MCF 10A (cell line): ENCODE measurements at regions of chr3 and their contacts with region 1.

Region 1: GRCh38 chr3:170414202-170414663 is 4.4 kb upstream of the CLDN11 start:
- DNase-seq: peak; percentile 78
- H3K4me3 Mint-ChIP-seq: no peak overlapping the region
- H3K27ac Mint-ChIP-seq: peak overlapping the region; percentile 39
- H3K4me1 Mint-ChIP-seq: peaks cover 9% of the 10 kb centered on the region
- H3K27me3 Mint-ChIP-seq: no peaks in the 10 kb centered on the region
- CTCF ChIP-seq: peak; percentile 95

Region 2: GRCh38 chr3:169764452-169765274 is 649.6 kb before region 1 on chr3 and contains the start of gene TERC:
- CTCF ChIA-PET with region 1: no interaction called
- POLR2A ChIA-PET with region 1: no interaction called
- intact Hi-C with region 1: loop called (anchors 2 kb)
- DNase-seq: peak; percentile 95
- H3K4me3 Mint-ChIP-seq: peak within 1 kb of the TSS; percentile 75
- H3K27ac Mint-ChIP-seq: peak within 1 kb of the TSS; percentile 94
- H3K4me1 Mint-ChIP-seq: peaks cover 10% of the 10 kb centered on the region
- H3K27me3 Mint-ChIP-seq: no peaks in the 10 kb centered on the region
- CTCF ChIP-seq: no peak
- total RNA-seq, gene TERC: 2.9 and 7.9 TPM in 2 replicates

Region 3: DNA sequence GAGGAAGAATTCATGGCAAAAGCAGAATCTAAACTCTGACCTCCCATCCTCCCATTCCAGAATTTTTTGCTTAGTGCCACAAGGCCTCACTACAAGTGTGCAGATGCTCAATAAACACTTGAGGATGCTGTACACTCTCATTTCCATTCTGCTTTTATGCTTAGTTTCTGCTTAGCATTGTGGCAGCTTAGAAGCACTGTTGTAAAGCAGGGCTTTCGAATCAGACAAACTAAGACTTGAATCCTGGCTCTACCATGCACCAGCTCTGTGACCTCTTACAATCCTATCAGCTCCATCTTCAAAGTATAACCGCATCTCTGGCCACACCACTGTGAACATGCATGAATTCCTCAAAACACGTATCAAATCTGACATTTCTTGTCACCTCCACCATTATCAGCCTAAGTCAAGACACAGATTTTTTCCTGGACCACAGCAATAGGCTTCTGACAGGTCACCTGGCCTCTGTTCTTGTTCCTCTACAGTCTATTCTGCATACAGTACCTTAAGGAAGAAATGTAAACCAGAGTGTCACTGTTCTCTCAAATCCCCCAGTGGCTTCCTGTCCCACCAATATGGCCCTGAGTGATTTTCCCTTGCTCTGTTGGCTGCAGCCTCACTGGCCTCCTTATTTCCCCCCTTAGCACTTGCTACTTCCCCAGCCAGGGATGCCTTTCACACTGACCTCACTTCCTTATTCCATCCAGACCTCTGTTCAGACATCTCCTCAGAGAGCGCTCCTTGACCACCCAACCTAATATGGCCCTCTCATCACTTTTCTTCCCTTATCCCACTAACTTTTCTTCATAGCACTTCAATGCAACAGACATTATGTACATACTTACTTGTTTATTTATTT is 224.6 kb before region 1 on chr3:
- CTCF ChIA-PET with region 1: interaction called, 3 read pairs
- POLR2A ChIA-PET with region 1: no interaction called
- intact Hi-C with region 1: loop called (anchors 1 kb)
- DNase-seq: no peak
- H3K4me3 Mint-ChIP-seq: no peak overlapping the region
- H3K27ac Mint-ChIP-seq: no peak overlapping the region
- H3K4me1 Mint-ChIP-seq: no peaks in the 10 kb centered on the region
- H3K27me3 Mint-ChIP-seq: no peaks in the 10 kb centered on the region
- CTCF ChIP-seq: no peak

Region 4: GRCh38 chr3:170330366-170330765 is 83.9 kb before region 1 on chr3:
- CTCF ChIA-PET with region 1: interaction called, 12 read pairs
- POLR2A ChIA-PET with region 1: no interaction called
- intact Hi-C with region 1: no loop called
- DNase-seq: peak; percentile 89
- H3K4me3 Mint-ChIP-seq: no peak overlapping the region
- H3K27ac Mint-ChIP-seq: peak overlapping the region; percentile 73
- H3K4me1 Mint-ChIP-seq: peaks cover 11% of the 10 kb centered on the region
- H3K27me3 Mint-ChIP-seq: no peaks in the 10 kb centered on the region
- CTCF ChIP-seq: no peak

Region 5: GRCh38 chr3:170429050-170429449 is 14.8 kb after region 1 on chr3:
- CTCF ChIA-PET with region 1: interaction called, 16 read pairs
- POLR2A ChIA-PET with region 1: no interaction called
- intact Hi-C with region 1: no loop called
- DNase-seq: no peak
- H3K4me3 Mint-ChIP-seq: no peak overlapping the region
- H3K27ac Mint-ChIP-seq: no peak overlapping the region
- H3K4me1 Mint-ChIP-seq: no peaks in the 10 kb centered on the region
- H3K27me3 Mint-ChIP-seq: no peaks in the 10 kb centered on the region
- CTCF ChIP-seq: no peak

Region 6: GRCh38 chr3:170499565-170500156 is 85.4 kb after region 1 on chr3:
- CTCF ChIA-PET with region 1: interaction called, 85 read pairs
- POLR2A ChIA-PET with region 1: no interaction called
- intact Hi-C with region 1: loop called (anchors 1 kb)
- DNase-seq: peak; percentile 69
- H3K4me3 Mint-ChIP-seq: no peak overlapping the region
- H3K27ac Mint-ChIP-seq: no peak overlapping the region
- H3K4me1 Mint-ChIP-seq: peaks cover 6% of the 10 kb centered on the region
- H3K27me3 Mint-ChIP-seq: no peaks in the 10 kb centered on the region
- CTCF ChIP-seq: peak; percentile 62

Region 7: DNA sequence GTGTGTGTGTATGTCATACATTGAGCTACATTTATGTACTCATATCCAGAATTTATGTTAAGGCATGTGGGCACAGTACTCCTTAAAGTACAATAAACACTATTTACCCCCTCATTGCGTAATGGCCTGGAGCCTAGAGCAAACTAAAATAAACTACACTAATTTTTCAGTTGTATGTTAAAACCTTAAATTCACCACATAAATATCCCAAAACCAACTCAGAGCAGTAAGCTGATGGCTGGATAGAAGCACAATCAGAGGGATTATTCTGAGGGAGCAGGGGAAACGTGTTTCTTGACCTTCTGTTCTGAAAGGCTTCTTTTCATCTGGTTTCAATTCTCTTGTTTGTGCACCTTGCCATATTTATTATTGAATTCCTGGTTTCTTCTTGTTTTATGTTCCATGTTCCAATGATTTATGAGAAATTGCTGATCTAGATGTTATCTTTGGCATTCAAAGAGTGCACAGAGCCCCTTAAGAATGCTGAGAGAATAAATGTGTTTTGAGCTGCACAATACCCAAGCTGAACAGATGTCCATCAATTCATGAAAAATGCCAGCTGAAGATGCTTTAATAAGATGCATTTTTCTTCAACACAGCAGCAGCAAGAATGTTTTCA is 426.1 kb after region 1 on chr3:
- CTCF ChIA-PET with region 1: interaction called, 10 read pairs
- POLR2A ChIA-PET with region 1: no interaction called
- intact Hi-C with region 1: no loop called
- DNase-seq: no peak
- H3K4me3 Mint-ChIP-seq: no peak overlapping the region
- H3K27ac Mint-ChIP-seq: no peak overlapping the region
- H3K4me1 Mint-ChIP-seq: peaks cover 4% of the 10 kb centered on the region
- H3K27me3 Mint-ChIP-seq: peaks cover 13% of the 10 kb centered on the region
- CTCF ChIP-seq: no peak